ENCODE measurements at regions of chr11 and their contacts with region 1.

Region 1: GRCh38 chr11:59142530-59143507 is at the start of gene FAM111A:
- DNase-seq: peak; percentile 88
- H3K4me3 Mint-ChIP-seq: peak within 1 kb of the TSS; percentile 95
- H3K27ac Mint-ChIP-seq: peak within 1 kb of the TSS; percentile 91
- H3K4me1 Mint-ChIP-seq: peaks cover 40% of the 10 kb centered on the region
- H3K27me3 Mint-ChIP-seq: no peaks in the 10 kb centered on the region
- total RNA-seq, gene FAM111A: 98.3 to 99.4 TPM

Region 2: GRCh38 chr11:57324886-57325734 is 1817.7 kb before region 1 on chr11 and contains the start of gene TNKS1BP1:
- CTCF ChIA-PET with region 1: no interaction called
- intact Hi-C with region 1: loop called (anchors 10 kb)
- DNase-seq: peak; percentile 95
- H3K4me3 Mint-ChIP-seq: peak within 1 kb of the TSS; percentile 82
- H3K27ac Mint-ChIP-seq: peak within 1 kb of the TSS; percentile 94
- H3K4me1 Mint-ChIP-seq: peaks cover 56% of the 10 kb centered on the region
- H3K27me3 Mint-ChIP-seq: no peaks in the 10 kb centered on the region
- total RNA-seq, gene TNKS1BP1: 14.1 to 14.7 TPM

Region 3: DNA sequence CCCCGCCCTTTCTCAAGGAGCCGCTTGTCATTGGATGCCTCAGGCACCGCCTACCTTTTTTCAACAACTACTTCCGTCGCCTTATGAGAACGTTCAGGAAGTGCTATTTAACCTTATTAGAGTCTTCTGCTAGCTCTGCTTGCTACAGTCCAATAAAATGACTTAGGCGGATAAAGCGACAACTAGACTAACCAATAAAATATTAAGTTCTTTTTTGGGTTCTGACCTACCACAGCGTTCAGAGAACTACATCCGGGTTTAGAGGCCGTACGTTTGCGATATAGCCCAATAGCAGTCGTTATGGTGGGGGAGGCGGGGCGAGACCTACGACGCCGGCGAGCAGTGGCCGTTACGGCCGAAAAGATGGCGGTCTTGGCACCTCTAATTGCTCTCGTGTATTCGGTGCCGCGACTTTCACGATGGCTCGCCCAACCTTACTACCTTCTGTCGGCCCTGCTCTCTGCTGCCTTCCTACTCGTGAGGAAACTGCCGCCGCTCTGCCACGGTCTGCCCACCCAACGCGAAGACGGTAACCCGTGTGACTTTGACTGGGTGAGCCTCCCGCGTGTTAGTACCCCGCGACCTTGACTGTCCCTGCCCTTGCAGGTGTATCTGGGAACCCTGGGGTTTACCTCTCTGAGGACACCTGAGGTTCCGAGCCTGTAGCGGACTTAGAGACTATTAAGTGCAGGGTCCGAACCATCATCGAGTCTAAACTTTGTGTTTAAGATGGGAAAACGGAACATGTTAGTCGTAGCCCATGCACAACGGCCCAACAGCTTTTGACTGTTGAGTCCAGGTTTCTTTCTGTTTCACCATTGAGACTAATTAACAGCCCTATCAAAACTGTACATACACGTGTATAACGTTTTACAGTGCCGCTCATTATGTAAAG is 1430.3 kb before region 1 on chr11 and contains the start of gene TMX2:
- CTCF ChIA-PET with region 1: no interaction called
- intact Hi-C with region 1: loop called (anchors 5 kb)
- DNase-seq: peak; percentile 95
- H3K4me3 Mint-ChIP-seq: peak within 1 kb of the TSS; percentile 99
- H3K27ac Mint-ChIP-seq: peak within 1 kb of the TSS; percentile 92
- H3K4me1 Mint-ChIP-seq: peaks cover 50% of the 10 kb centered on the region
- H3K27me3 Mint-ChIP-seq: no peaks in the 10 kb centered on the region
- total RNA-seq, gene TMX2: 49.8 to 54.7 TPM

Region 4: DNA sequence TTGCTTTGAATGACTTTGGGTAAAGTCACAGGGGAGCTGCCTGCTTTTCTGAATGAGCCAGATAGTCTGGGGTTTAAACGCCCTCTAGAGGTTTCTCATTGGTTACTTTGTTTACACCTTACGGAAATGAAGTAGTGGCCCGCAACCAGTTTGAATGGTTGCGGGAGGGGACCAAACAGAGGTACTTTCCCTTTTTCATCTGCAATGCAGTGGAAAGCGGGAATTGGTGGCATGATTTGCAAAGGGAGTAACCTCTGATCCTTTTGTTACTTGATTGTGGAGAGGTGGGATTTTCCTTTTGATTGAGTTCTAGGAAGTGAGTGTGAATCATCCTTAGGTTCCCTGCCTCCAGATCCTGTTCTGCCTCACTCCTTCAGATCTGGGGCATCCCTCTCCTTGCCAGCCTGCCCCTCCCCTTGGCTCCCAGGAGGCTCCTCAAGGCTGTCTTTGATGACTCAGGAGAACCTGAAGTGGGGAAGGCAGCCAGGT is 219.5 kb before region 1 on chr11:
- CTCF ChIA-PET with region 1: no interaction called
- intact Hi-C with region 1: loop called (anchors 1 kb)
- DNase-seq: peak; percentile 61
- H3K4me3 Mint-ChIP-seq: no peak overlapping the region
- H3K27ac Mint-ChIP-seq: peak overlapping the region; percentile 11
- H3K4me1 Mint-ChIP-seq: peaks cover 25% of the 10 kb centered on the region
- H3K27me3 Mint-ChIP-seq: no peaks in the 10 kb centered on the region

Measured in activated naive CD4-positive, alpha-beta T cell treated with anti-CD3 and anti-CD28 coated beads for 36 hours (primary cell).